Activated naive CD4-positive, alpha-beta T cell treated with anti-CD3 and anti-CD28 coated beads for 36 hours (primary cell): ENCODE measurements at regions of chr13 and their contacts with region 1.

Region 1: GRCh38 chr13:20945952-20946383 is 43.4 kb upstream of the XPO4 start:
- DNase-seq: peak; percentile 9
- H3K4me3 Mint-ChIP-seq: peak overlapping the region; percentile 21
- H3K27ac Mint-ChIP-seq: no peak overlapping the region
- H3K4me1 Mint-ChIP-seq: peaks cover 10% of the 10 kb centered on the region
- H3K27me3 Mint-ChIP-seq: peaks cover 44% of the 10 kb centered on the region

Region 2: DNA sequence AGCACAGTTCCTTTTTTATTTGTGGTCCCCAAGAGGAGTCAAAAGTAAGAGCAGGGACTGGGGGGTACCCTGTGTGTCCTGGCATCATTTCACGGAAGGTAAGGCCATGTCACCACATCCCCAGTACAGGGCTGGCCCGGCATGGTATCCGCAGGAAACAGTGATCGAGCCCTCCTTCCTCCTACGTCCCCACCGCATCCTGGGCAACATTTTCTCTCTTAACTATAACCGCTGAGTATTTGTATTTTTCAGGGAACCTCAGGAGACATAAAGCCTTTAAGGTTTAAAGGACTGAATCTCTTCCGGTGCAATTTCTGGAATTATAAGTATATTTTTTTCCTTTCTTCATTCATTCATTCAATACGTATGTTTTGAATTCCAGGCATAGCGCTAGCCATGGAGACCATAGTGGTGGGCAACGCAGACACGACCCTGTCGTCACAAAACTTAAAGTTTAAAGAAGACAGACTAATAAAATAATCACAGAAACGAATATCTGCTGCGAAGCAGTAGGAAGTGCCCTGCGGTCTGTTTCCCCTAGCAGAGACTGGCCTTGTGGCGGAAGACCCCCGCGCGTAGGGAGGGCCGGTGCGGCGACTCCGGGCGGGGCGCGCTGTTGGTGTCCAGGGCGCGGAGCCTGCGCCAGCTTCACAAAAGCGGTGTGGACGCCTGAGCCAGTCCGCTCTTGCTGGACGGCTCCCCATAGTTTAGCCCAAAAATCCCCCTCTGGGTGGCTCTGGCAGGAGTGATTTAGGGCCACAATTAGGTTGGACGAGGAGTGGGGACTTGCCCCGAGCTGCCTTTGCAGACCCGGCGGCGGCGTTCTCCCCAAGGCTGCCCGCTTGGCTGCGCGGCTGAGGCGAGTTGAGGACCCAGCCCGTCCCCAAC is 129.3 kb after region 1 on chr13:
- CTCF ChIA-PET with region 1: no interaction called
- intact Hi-C with region 1: loop called (anchors 10 kb)
- DNase-seq: peak; percentile 68
- H3K4me3 Mint-ChIP-seq: peak overlapping the region; percentile 66
- H3K27ac Mint-ChIP-seq: no peak overlapping the region
- H3K4me1 Mint-ChIP-seq: peaks cover 11% of the 10 kb centered on the region
- H3K27me3 Mint-ChIP-seq: peaks cover 8% of the 10 kb centered on the region

Region 3: GRCh38 chr13:21106089-21106488 is 160.1 kb after region 1 on chr13:
- CTCF ChIA-PET with region 1: interaction called, 3 read pairs
- intact Hi-C with region 1: loop called (anchors 1 kb)
- DNase-seq: no peak
- H3K4me3 Mint-ChIP-seq: no peak overlapping the region
- H3K27ac Mint-ChIP-seq: no peak overlapping the region
- H3K4me1 Mint-ChIP-seq: no peaks in the 10 kb centered on the region
- H3K27me3 Mint-ChIP-seq: no peaks in the 10 kb centered on the region

Region 4: DNA sequence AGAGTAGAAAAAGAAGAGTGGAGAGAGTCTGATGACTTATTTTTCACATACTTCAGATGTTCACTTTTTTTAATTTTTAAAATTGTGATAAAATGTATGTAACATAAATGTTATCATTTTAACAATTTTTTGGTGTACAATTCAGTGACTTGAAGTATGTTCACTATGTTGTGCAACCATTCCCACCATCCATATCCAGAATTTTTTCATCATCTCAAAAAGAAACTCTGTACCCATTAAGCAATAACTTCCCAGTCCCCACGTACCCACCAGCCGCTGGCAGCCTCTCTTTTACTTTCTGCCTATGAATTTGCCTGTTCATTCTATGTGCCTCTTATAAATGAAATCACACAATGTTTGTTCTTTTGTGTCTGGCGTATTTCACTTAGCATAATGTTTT is 187.1 kb after region 1 on chr13:
- CTCF ChIA-PET with region 1: no interaction called
- intact Hi-C with region 1: loop called (anchors 1 kb)
- DNase-seq: no peak
- H3K4me3 Mint-ChIP-seq: no peak overlapping the region
- H3K27ac Mint-ChIP-seq: no peak overlapping the region
- H3K4me1 Mint-ChIP-seq: no peaks in the 10 kb centered on the region
- H3K27me3 Mint-ChIP-seq: peaks cover 2% of the 10 kb centered on the region

Region 5: DNA sequence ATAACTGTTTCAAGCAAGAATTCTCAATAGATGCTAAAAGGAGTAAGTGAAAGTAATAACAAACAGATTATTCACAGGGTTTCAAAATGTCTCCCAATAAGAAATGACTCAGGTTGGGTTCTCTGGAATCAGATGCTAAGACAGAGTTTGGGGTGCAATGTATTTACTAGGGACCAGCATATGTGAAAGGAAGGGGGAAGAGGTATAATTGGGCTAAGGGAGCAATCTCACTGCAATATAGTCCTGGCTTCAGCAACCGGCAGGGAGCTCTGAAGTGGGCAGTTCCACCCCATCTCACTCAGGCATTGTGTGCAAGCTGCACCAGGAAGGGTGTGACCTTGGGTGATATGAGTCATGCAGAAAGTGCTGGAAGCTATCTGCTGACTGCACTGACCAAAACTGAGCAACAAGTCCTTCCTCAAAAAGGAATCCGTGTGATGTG is 489.8 kb after region 1 on chr13:
- CTCF ChIA-PET with region 1: no interaction called
- intact Hi-C with region 1: no loop called
- DNase-seq: peak; percentile 60
- H3K4me3 Mint-ChIP-seq: no peak overlapping the region
- H3K27ac Mint-ChIP-seq: no peak overlapping the region
- H3K4me1 Mint-ChIP-seq: peaks cover 29% of the 10 kb centered on the region
- H3K27me3 Mint-ChIP-seq: no peaks in the 10 kb centered on the region